ENCODE measurements at regions of chr12 and their contacts with region 1.

Region 1: GRCh38 chr12:113196996-113197395 is 11.5 kb downstream of the RITA1 start:
- DNase-seq: peak in 1 of 2 experiments; percentile 72
- H3K4me3 ChIP-seq: no peak overlapping the region
- H3K27ac ChIP-seq: no peak overlapping the region
- H3K4me1 ChIP-seq: peaks cover 0 to 5% (median 0%) of the 10 kb centered on the region in 4 experiments; a peak in 2 of 7 replicates
- H3K27me3 ChIP-seq: no peaks in the 10 kb centered on the region
- CTCF ChIP-seq: peak; percentile 65 to 73 (median 72)
- EP300 ChIP-seq: no peak
- POLR2A ChIP-seq: no peak
- RAD21 ChIP-seq: peak; percentile 80 to 81

Region 2: GRCh38 chr12:113048716-113049127 is 148.3 kb before region 1 on chr12:
- CTCF ChIA-PET with region 1: no interaction called
- POLR2A ChIA-PET with region 1: no interaction called
- DNase-seq: no peak
- H3K4me3 ChIP-seq: no peak overlapping the region
- H3K27ac ChIP-seq: no peak overlapping the region
- H3K4me1 ChIP-seq: no peaks in the 10 kb centered on the region; a peak in 2 of 7 replicates
- H3K27me3 ChIP-seq: no peaks in the 10 kb centered on the region; a peak in 2 of 7 replicates
- CTCF ChIP-seq: peak; percentile 38 to 86 (median 68)
- EP300 ChIP-seq: no peak
- POLR2A ChIP-seq: no peak
- RAD21 ChIP-seq: peak; percentile 87 to 91

Region 3: GRCh38 chr12:113059071-113059595 is 137.9 kb before region 1 on chr12:
- CTCF ChIA-PET with region 1: no interaction called
- POLR2A ChIA-PET with region 1: no interaction called
- DNase-seq: no peak
- H3K4me3 ChIP-seq: no peak overlapping the region
- H3K27ac ChIP-seq: no peak overlapping the region
- H3K4me1 ChIP-seq: peaks cover 0 to 11% (median 7%) of the 10 kb centered on the region in 4 experiments; a peak in 5 of 7 replicates
- H3K27me3 ChIP-seq: peaks cover 0 to 22% (median 19%) of the 10 kb centered on the region in 4 experiments; a peak in 6 of 7 replicates
- CTCF ChIP-seq: no peak
- EP300 ChIP-seq: no peak
- POLR2A ChIP-seq: no peak
- RAD21 ChIP-seq: no peak

Region 4: DNA sequence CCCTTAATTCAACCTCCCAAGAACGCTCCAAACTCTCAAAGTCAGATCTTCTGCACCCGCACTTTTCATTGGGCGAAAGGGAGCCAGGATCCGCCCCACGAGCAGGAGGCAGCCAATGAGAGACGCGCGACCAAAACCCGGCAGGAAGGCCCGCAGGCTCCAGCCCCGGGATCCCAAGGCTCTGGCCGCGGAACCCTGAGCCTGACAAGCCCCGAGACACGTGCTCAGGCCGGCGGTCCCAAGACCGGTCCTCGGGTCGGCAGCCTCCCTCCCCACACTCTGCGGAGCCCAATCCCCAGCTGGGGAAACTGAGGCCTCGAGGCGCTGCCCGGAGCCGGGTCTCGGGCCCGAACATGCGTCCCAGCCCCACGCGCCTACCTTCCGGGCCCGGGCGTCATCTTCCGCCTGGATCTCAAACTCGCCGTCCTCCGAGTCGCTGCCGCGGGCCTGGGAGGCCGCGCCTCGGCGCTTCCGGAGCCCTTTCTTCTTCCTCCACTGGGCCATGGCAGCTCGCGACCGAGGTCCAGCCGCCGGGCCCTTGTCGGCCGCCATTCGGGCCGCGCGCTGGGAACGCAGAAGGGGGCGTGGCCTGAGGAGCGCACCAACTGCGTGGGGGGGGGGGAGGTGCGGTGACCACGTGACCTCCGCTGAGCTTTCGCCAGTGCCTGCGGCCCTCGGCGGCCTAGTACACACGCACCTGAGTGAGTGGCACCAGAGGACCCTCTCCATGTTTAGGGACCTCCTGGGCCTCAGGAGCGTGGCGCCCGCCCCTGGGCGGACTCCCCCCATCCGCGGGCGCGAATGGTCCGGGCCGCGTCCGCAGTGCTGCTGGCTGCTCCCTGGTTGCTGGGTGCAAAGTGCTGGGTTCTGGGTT is 11.9 kb before region 1 on chr12 and contains the starts of genes DDX54 and RITA1:
- CTCF ChIA-PET with region 1: interaction called, 5 read pairs
- POLR2A ChIA-PET with region 1: interaction called, 30 read pairs
- DNase-seq: peak; percentile 81 to 90
- H3K4me3 ChIP-seq: peak within 1 kb of the TSS; percentile 75 to 90 (median 80)
- H3K27ac ChIP-seq: peak within 1 kb of the TSS; percentile 84
- H3K4me1 ChIP-seq: peaks cover 0 to 6% (median 3%) of the 10 kb centered on the region in 4 experiments; a peak in 4 of 7 replicates
- H3K27me3 ChIP-seq: no peaks in the 10 kb centered on the region
- CTCF ChIP-seq: no peak
- EP300 ChIP-seq: peak in 1 of 2 experiments; percentile 95; a peak in 2 of 3 replicates
- POLR2A ChIP-seq: peak; percentile 78 to 91
- RAD21 ChIP-seq: no peak
- total RNA-seq, gene DDX54: 112 and 113 TPM in 2 replicates
- total RNA-seq, gene RITA1: 25.8 and 26.4 TPM in 2 replicates

Region 5: DNA sequence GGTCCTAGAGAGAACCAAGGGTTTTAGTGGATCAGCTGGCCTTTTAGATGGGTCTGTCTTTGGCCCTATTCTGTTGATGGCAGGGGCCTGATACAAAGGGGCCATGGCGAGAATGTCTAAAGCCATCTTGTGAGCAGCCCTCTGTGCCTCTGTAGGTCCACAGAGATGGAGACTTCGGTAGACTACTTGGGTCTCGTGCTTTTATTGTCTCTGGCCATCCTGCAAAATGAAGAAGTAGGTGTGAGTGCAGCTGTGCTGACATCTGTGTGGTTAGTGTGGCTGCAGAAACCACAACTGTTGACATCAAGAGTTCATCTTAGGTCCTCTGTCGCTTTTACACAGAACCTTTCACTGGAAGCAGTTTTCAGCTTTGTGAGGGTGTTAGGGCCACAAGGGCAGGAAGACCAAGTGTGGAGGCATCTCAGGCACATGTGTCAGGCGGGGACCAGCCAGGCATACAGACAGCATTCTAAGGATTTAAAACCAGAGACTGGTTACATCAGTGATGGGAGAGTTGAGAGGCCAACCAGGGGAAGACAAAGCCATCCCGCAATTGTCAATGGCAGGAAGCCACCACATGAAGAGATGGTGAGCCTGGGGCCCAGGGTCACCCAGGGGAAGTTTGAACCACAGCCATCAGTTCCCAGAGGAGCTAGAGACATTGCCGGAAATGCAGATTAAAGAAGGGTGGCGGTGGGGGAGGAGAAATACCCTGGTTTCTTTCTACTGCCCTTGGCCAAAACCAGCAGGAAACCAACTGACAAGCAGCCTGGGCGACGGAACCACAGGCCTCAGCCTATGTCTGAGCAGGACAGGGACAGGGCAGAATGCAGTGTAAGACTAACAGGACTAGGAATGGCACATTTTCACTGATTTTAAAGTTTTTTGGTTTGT is 11.3 kb after region 1 on chr12:
- CTCF ChIA-PET with region 1: interaction called, 10 read pairs
- POLR2A ChIA-PET with region 1: interaction called, 6 read pairs
- DNase-seq: no peak
- H3K4me3 ChIP-seq: no peak overlapping the region
- H3K27ac ChIP-seq: no peak overlapping the region
- H3K4me1 ChIP-seq: no peaks in the 10 kb centered on the region
- H3K27me3 ChIP-seq: no peaks in the 10 kb centered on the region
- CTCF ChIP-seq: no peak
- EP300 ChIP-seq: no peak
- POLR2A ChIP-seq: no peak
- RAD21 ChIP-seq: no peak

Measured in H1 (cell line).